A673 (cell line): ENCODE measurements at regions of chr3 and their contacts with region 1.

Region 1: DNA sequence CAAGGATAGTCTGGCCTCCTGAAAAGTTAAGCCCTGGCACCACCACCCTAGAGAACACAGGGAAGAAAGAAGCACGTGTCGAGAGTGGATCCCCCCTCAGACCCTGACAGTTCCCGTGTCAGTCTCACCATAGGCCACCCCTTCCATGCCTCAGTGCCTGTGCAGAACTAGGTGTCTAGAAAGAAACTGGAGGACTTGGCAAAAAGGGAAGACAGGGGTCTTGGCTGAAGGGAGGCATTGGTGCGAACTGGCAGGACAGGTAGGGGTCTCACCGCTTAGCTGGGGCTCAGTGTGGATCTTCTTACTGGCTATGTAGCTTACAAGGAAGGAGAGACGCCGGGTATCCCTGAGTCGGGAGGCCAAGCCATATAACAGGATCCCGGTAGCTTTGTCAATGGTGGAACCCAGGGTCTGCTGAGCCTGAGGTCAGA is 490 bp downstream of the QARS1 start:
- DNase-seq: no peak
- H3K4me3 ChIP-seq: peak overlapping the region; percentile 70
- H3K27ac ChIP-seq: peak overlapping the region; percentile 85
- H3K4me1 ChIP-seq: peaks cover 7% of the 10 kb centered on the region
- H3K27me3 ChIP-seq: no peaks in the 10 kb centered on the region
- CTCF ChIP-seq: no peak

Region 2: GRCh38 chr3:49180116-49180515 is 76.0 kb after region 1 on chr3:
- CTCF ChIA-PET with region 1: no interaction called
- POLR2A ChIA-PET with region 1: interaction called, 12 read pairs
- intact Hi-C with region 1: no loop called
- DNase-seq: no peak
- H3K4me3 ChIP-seq: no peak overlapping the region
- H3K27ac ChIP-seq: no peak overlapping the region
- H3K4me1 ChIP-seq: no peaks in the 10 kb centered on the region
- H3K27me3 ChIP-seq: no peaks in the 10 kb centered on the region
- CTCF ChIP-seq: no peak